CD8-positive, alpha-beta T cell (primary cell): ENCODE measurements at regions of chr3 and their contacts with region 1.

Region 1: GRCh38 chr3:107627962-107628542 is 105.3 kb downstream of the BBX start:
- DNase-seq: no peak
- ATAC-seq: no peak
- H3K4me3 ChIP-seq: no peak overlapping the region
- H3K4me3 Mint-ChIP-seq: no peak overlapping the region
- H3K27ac ChIP-seq: no peak overlapping the region
- H3K27ac Mint-ChIP-seq: no peak overlapping the region
- H3K4me1 ChIP-seq: peaks cover 5% of the 10 kb centered on the region
- H3K4me1 Mint-ChIP-seq: peaks cover 40% of the 10 kb centered on the region
- H3K27me3 ChIP-seq: no peaks in the 10 kb centered on the region
- H3K27me3 Mint-ChIP-seq: no peaks in the 10 kb centered on the region
- CTCF ChIP-seq: no peak

Region 2: DNA sequence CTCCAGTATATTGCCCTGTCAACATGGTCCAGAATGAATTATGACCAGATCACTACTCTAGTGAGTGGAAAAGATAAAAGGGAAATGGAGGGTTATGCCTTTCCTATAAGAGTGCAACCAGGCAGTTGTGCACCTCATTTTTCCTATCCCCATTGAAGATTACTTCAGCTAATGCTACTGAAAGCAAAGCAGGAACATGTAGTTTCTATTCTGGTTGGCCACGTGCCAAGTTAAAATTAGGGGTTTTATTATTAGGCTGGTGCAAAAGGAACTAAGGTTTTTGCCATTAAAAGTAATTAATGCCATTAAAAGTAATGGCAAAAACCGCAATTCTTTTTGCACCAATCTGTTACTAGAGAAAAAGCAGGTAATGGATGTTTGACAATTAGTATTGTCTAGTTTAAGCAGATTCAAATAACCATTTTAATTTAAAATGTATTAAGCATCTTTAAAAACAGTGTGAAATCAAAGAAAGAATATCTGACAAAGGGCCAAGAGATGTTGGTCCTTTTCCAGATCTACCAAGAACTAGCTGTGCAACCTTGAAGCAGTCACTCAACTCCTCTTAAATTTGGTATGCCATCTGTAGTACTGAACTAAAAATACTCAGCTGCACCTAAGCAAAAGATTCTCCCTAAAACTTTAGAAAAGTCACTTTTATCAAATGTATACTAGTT is 818.3 kb before region 1 on chr3:
- CTCF ChIA-PET with region 1: no interaction called
- POLR2A ChIA-PET with region 1: no interaction called
- intact Hi-C with region 1: loop called in 1 of 2 experiments (anchors 10 kb)
- DNase-seq: no peak
- ATAC-seq: no peak
- H3K4me3 ChIP-seq: no peak overlapping the region
- H3K4me3 Mint-ChIP-seq: no peak overlapping the region
- H3K27ac ChIP-seq: no peak overlapping the region
- H3K27ac Mint-ChIP-seq: no peak overlapping the region
- H3K4me1 ChIP-seq: no peaks in the 10 kb centered on the region
- H3K4me1 Mint-ChIP-seq: no peaks in the 10 kb centered on the region
- H3K27me3 ChIP-seq: no peaks in the 10 kb centered on the region
- H3K27me3 Mint-ChIP-seq: peaks cover 3% of the 10 kb centered on the region
- CTCF ChIP-seq: no peak